Mammary epithelial cell (primary cell): ENCODE measurements at regions of chr5 and their contacts with region 1.

Region 1: DNA sequence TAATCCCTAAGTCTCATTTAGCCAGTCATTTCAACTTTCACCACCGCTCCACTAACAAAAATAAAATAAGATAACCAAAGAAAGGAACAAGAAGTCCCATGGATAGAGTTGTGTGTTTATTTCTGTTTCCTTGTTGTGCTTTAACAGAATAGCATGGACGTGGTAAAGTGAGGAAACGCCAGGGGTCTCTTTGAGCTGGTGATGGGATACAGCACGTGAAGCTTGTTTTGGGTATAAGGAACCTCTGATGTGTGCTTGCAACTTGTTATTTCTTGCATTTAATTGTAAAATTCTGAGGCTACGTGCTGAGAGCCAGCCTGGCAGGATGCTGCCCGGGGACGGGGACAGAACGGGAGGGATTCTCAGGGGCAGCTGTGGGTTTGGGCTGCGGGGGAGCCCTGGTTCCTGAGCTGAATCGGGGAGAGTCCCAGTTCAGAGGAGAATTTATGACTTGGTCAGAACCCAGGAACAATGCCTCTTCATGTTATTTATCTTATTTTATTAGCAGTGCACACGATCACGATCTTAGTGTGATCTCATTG is 63.4 kb downstream of the ANKRD33B start:
- DNase-seq: no peak
- H3K4me3 ChIP-seq: peak overlapping the region; percentile 18 to 42 (median 32)
- H3K27ac ChIP-seq: no peak overlapping the region
- H3K4me1 ChIP-seq: peaks cover 22% of the 10 kb centered on the region
- H3K27me3 ChIP-seq: no peaks in the 10 kb centered on the region
- CTCF ChIP-seq: no peak

Region 2: GRCh38 chr5:10457682-10458574 is 169.3 kb before region 1 on chr5:
- CTCF ChIA-PET with region 1: interaction called, 7 read pairs
- dilution Hi-C with region 1: no loop called
- in situ Hi-C with region 1: loop called (anchors 5 kb)
- intact Hi-C with region 1: no loop called
- DNase-seq: no peak
- H3K4me3 ChIP-seq: no peak overlapping the region
- H3K27ac ChIP-seq: no peak overlapping the region
- H3K4me1 ChIP-seq: peaks cover 50% of the 10 kb centered on the region
- H3K27me3 ChIP-seq: no peaks in the 10 kb centered on the region
- CTCF ChIP-seq: peak in 1 of 2 donors; percentile 25

Region 3: DNA sequence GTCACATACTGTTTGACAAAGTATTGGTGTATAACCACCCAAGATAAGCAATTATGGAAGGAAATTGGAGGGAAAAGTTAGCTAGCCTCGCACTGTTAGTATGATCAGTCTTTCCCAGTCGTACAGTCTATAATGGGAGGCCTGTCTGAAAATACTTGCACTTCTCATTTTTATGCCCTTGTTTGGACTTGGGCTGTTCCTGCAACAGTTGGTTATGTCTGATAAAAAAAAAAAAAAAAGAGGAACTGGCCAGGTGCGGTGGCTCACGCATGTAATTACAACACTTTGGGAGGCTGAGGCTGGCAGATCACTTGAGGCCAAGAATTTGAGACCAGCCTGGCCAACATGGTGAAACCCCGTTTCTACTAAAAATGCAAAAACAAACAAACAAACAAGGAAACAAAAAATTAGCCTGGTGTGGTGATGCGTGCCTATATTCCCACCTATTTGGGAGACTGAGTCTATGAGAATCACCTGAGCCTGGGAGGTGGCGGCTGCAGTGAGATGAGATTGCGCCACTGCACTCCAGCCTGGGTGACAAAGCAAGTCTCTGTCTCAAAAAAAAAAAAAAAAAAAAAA is 121.6 kb before region 1 on chr5:
- CTCF ChIA-PET with region 1: no interaction called
- dilution Hi-C with region 1: no loop called
- in situ Hi-C with region 1: no loop called
- intact Hi-C with region 1: no loop called
- DNase-seq: no peak
- H3K4me3 ChIP-seq: no peak overlapping the region
- H3K27ac ChIP-seq: no peak overlapping the region
- H3K4me1 ChIP-seq: no peaks in the 10 kb centered on the region
- H3K27me3 ChIP-seq: no peaks in the 10 kb centered on the region
- CTCF ChIP-seq: no peak

Region 4: GRCh38 chr5:10528056-10528816 is 99.0 kb before region 1 on chr5:
- CTCF ChIA-PET with region 1: no interaction called
- dilution Hi-C with region 1: no loop called
- in situ Hi-C with region 1: no loop called
- intact Hi-C with region 1: loop called (anchors 1 kb)
- DNase-seq: peak; percentile 73
- H3K4me3 ChIP-seq: no peak overlapping the region
- H3K27ac ChIP-seq: no peak overlapping the region
- H3K4me1 ChIP-seq: peaks cover 15% of the 10 kb centered on the region
- H3K27me3 ChIP-seq: no peaks in the 10 kb centered on the region
- CTCF ChIP-seq: peak in 1 of 2 donors; percentile 48

Region 5: GRCh38 chr5:10552183-10553143 is 74.8 kb before region 1 on chr5:
- CTCF ChIA-PET with region 1: no interaction called
- dilution Hi-C with region 1: loop called (anchors 5 kb)
- in situ Hi-C with region 1: no loop called
- intact Hi-C with region 1: loop called (anchors 5 kb)
- DNase-seq: no peak
- H3K4me3 ChIP-seq: no peak overlapping the region
- H3K27ac ChIP-seq: peak overlapping the region; percentile 47
- H3K4me1 ChIP-seq: peaks cover 35% of the 10 kb centered on the region
- H3K27me3 ChIP-seq: no peaks in the 10 kb centered on the region
- CTCF ChIP-seq: no peak

Region 6: GRCh38 chr5:10601246-10602030 is 25.8 kb before region 1 on chr5:
- CTCF ChIA-PET with region 1: no interaction called
- dilution Hi-C with region 1: no loop called
- in situ Hi-C with region 1: no loop called
- intact Hi-C with region 1: loop called (anchors 2 kb)
- DNase-seq: peak; percentile 86
- H3K4me3 ChIP-seq: peak overlapping the region in 2 of 3 experiments; percentile 12 to 23
- H3K27ac ChIP-seq: peak overlapping the region; percentile 47
- H3K4me1 ChIP-seq: peaks cover 28% of the 10 kb centered on the region
- H3K27me3 ChIP-seq: no peaks in the 10 kb centered on the region
- CTCF ChIP-seq: no peak